ENCODE measurements at regions of chr11 and their contacts with region 1.

Region 1: DNA sequence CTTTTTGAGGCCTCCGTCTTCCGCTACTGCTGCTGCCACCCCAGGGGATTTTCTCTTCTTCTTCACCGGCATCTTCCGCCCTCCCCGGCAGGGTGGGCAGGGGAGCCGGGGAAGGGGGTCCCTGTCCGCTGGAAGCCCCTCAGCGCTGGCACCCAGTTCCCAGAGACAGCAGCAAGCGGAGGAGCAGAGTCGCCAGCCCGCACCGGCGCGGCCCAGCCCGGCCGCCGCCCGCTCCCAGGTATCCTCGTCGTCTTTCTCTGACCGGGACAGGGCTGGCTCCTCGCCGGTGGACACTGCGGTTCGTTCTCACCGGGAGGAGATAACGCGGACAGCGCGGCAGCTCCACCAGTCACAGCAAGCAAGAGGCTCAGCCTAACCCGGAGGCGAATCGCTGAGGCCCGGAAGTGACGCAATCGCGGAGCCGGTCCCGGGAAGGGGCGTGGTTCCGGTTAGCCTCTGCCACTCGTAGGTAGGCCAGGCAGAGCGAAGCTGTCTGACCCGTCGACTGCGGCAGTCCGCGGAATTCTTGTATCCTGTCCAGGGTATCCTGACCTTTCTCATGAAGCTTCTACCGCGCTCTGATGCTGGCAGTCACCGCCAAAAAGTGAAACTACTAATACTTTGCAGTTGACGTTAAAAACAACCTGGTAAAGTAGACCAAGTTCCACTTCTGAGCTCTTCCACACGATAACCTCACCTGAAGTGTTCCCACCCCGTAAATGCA is at the start of gene DCUN1D5:
- DNase-seq: peak; percentile 89 to 94 (median 93)
- ATAC-seq: peak; percentile 99
- H3K4me3 ChIP-seq: peak within 1 kb of the TSS; percentile 93
- H3K4me3 Mint-ChIP-seq: peak within 1 kb of the TSS; percentile 79 to 98 (median 92)
- H3K27ac ChIP-seq: peak within 1 kb of the TSS; percentile 89
- H3K27ac Mint-ChIP-seq: peak within 1 kb of the TSS; percentile 89 to 99 (median 97)
- H3K4me1 ChIP-seq: peaks cover 15 to 25% of the 10 kb centered on the region in 2 donors
- H3K4me1 Mint-ChIP-seq: peaks cover 16 to 40% (median 34%) of the 10 kb centered on the region in 7 donors
- H3K27me3 ChIP-seq: peaks cover 0 to 3% of the 10 kb centered on the region in 2 donors
- H3K27me3 Mint-ChIP-seq: peaks cover 22 to 35% (median 26%) of the 10 kb centered on the region in 5 donors
- total RNA-seq, gene DCUN1D5: 12.2 to 28.5 (median 14.2) TPM

Region 2: DNA sequence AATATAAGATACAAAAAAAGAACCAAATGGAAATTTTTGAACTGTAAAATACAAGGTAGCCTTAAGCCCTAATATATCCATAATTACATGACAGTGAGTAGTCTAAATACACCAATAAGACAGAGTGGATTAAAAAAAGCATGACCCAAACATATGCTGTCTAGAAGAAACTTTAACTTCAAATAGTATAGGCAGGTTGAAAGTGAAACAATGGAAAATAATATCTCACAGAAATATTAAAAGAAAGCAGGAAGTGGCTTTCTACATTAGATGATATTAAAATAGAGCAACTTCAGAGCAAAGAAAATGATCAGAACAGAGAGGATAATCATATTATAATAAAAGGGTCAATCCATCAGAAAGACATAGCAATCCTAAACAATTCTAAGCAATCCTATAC is 21.8 kb before region 1 on chr11:
- CTCF ChIA-PET with region 1: no interaction called
- POLR2A ChIA-PET with region 1: no interaction called
- intact Hi-C with region 1: loop called in 1 of 2 experiments (anchors 2 kb)
- DNase-seq: no peak
- ATAC-seq: peak; percentile 20
- H3K4me3 ChIP-seq: no peak overlapping the region
- H3K4me3 Mint-ChIP-seq: peak overlapping the region in 5 of 10 donors; percentile 2 to 56 (median 8)
- H3K27ac ChIP-seq: no peak overlapping the region
- H3K27ac Mint-ChIP-seq: peak overlapping the region in 2 of 9 donors; percentile 6 to 17
- H3K4me1 ChIP-seq: peaks cover 0 to 10% of the 10 kb centered on the region in 2 donors
- H3K4me1 Mint-ChIP-seq: peaks cover 23 to 54% (median 41%) of the 10 kb centered on the region in 7 donors
- H3K27me3 ChIP-seq: no peaks in the 10 kb centered on the region
- H3K27me3 Mint-ChIP-seq: no peaks in the 10 kb centered on the region

Region 3: DNA sequence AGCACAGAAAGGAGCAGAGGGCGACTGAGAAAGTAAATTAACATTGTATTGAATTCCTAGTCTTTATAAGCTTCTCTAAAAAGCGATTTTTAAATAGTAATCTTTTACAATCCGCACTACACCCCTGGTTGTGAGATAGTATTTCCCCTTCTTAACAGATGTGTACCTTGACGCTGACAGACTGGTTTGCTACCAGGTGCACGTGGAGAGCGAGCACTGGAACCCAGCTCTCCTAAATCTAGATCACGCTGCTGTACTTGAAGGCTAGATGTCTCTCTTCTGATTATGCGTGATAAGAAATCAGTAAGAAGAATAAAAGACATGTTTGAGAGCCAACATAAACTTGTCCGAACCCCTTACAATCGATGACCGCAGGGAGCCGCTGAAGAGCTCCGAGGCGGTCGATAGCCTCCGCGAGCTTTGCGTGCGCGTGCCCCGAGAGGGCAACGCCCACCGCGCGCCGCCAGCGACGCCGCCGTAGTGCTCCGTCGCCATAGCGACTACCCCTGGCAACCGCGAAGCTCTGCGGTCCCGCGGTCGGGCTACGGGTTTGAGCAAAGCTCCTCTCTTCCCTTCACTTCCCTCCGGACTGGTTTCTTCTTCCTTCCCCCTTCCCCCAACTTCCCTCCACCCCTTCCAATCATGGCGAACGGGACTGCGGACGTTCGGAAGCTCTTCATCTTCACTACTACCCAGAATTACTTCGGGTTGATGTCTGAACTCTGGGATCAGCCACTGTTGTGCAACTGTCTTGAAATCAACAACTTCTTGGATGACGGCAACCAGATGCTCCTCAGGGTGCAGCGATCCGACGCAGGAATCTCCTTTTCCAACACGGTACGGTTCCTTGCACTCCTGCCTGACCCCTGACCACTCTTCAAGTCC is 17.2 kb after region 1 on chr11 and contains the start of gene DYNC2H1:
- CTCF ChIA-PET with region 1: interaction called, 11 read pairs
- POLR2A ChIA-PET with region 1: interaction called, 32 read pairs
- intact Hi-C with region 1: loop called (anchors 1 kb)
- DNase-seq: peak; percentile 78 to 91 (median 89)
- ATAC-seq: peak; percentile 99
- H3K4me3 ChIP-seq: peak within 1 kb of the TSS; percentile 93
- H3K4me3 Mint-ChIP-seq: peak within 1 kb of the TSS; percentile 87 to 99 (median 94)
- H3K27ac ChIP-seq: peak within 1 kb of the TSS; percentile 60
- H3K27ac Mint-ChIP-seq: peak within 1 kb of the TSS; percentile 87 to 99 (median 92)
- H3K4me1 ChIP-seq: peaks cover 4 to 6% of the 10 kb centered on the region in 2 donors
- H3K4me1 Mint-ChIP-seq: peaks cover 5 to 19% (median 13%) of the 10 kb centered on the region in 7 donors
- H3K27me3 ChIP-seq: no peaks in the 10 kb centered on the region
- H3K27me3 Mint-ChIP-seq: peaks cover 6 to 42% (median 7%) of the 10 kb centered on the region in 5 donors
- total RNA-seq, gene DYNC2H1: 1.5 to 4.2 (median 3.0) TPM

Region 4: DNA sequence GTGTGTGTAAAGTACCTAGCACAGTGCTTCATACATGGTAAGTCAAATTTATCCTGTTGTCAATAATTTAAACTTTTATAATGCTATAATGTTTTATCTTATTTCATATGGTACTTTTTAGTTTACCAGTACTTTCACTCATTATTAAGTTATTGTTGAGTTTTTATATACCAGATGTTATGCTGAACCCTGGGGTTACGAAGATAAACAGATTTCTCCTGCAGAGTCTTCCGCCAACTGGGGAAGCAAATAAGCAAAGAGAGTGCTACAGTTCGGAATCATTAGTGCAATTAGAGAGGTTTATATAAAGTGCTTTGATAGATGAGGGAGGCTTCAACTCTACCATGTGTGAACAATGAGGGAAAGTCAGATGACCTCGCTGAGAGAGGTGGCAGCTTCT is 379.6 kb after region 1 on chr11:
- CTCF ChIA-PET with region 1: no interaction called
- POLR2A ChIA-PET with region 1: no interaction called
- intact Hi-C with region 1: no loop called
- DNase-seq: no peak
- ATAC-seq: no peak
- H3K4me3 ChIP-seq: no peak overlapping the region
- H3K4me3 Mint-ChIP-seq: no peak overlapping the region
- H3K27ac ChIP-seq: no peak overlapping the region
- H3K27ac Mint-ChIP-seq: no peak overlapping the region
- H3K4me1 ChIP-seq: no peaks in the 10 kb centered on the region
- H3K4me1 Mint-ChIP-seq: no peaks in the 10 kb centered on the region
- H3K27me3 ChIP-seq: no peaks in the 10 kb centered on the region
- H3K27me3 Mint-ChIP-seq: no peaks in the 10 kb centered on the region

Region 5: DNA sequence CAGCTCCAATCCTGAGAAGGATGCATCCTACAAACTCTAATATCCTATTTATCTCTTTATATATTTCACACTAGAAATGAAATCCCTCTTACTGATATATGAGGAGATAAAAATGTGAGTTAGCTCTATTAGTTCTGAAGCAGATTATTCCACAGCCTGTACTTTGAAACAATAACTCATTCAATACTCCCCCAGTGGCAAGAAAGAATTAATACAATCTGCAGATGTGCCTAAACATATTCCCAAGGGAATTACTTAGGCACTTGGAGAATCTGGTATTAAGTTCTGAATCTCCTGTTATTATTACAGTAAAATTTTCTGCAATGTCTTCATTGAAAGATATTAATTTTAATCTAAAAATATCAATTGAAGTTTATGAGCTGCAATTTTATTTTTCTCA is 1003.8 kb after region 1 on chr11:
- CTCF ChIA-PET with region 1: no interaction called
- POLR2A ChIA-PET with region 1: no interaction called
- intact Hi-C with region 1: no loop called
- DNase-seq: no peak
- ATAC-seq: no peak
- H3K4me3 ChIP-seq: no peak overlapping the region
- H3K4me3 Mint-ChIP-seq: no peak overlapping the region
- H3K27ac ChIP-seq: no peak overlapping the region
- H3K27ac Mint-ChIP-seq: no peak overlapping the region
- H3K4me1 ChIP-seq: no peaks in the 10 kb centered on the region
- H3K4me1 Mint-ChIP-seq: no peaks in the 10 kb centered on the region
- H3K27me3 ChIP-seq: no peaks in the 10 kb centered on the region
- H3K27me3 Mint-ChIP-seq: no peaks in the 10 kb centered on the region

Measured in naive thymus-derived CD4-positive, alpha-beta T cell (primary cell).